Posterior vena cava (tissue), 2 donors: ENCODE measurements at regions of chr19 and their contacts with region 1.

Region 1: GRCh38 chr19:55503502-55504251 is 15.4 kb downstream of the SSC5D start:
- DNase-seq: peak; percentile 98

Region 2: GRCh38 chr19:55146078-55146704 is 357.5 kb before region 1 on chr19:
- intact Hi-C with region 1: loop called in 1 of 2 experiments (anchors 10 kb)
- DNase-seq: no peak

Region 3: GRCh38 chr19:55301459-55302317 is 202.0 kb before region 1 on chr19:
- intact Hi-C with region 1: loop called in 1 of 2 experiments (anchors 10 kb)
- DNase-seq: peak; percentile 96

Region 4: GRCh38 chr19:55467236-55468053 is 36.2 kb before region 1 on chr19:
- intact Hi-C with region 1: loop called (anchors 5 kb)
- DNase-seq: peak; percentile 90

Region 5: GRCh38 chr19:55546822-55547616 is 43.3 kb after region 1 on chr19:
- intact Hi-C with region 1: no loop called
- DNase-seq: peak; percentile 92